ENCODE measurements at regions of chr2 and their contacts with region 1.

Region 1: DNA sequence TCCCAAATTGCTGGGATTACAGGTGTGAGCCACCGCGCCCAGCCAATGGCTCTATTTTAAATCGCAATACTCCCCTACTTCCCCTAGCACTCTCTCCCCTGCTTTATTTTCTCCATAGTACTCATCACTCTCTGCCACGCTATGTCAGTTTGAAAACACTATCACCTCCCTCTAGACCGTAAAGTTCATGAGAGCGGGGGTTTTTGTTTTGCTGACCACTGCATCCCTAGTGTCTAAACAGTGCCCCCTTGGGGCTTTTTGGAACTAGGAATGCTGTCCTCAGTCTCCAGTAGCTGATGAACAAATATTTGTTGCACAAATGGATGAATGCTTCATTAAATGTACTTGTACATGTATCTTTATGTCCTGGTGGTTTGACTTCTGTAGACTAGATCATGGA is 44.1 kb downstream of the ATOH8 start:
- DNase-seq: peak in 1 of 2 donors; percentile 52
- H3K4me3 ChIP-seq: no peak overlapping the region
- H3K27ac ChIP-seq: no peak overlapping the region
- H3K4me1 ChIP-seq: peaks cover 3 to 29% of the 10 kb centered on the region in 2 donors
- H3K27me3 ChIP-seq: no peaks in the 10 kb centered on the region
- CTCF ChIP-seq: peak; percentile 47 to 66 (median 62)
- POLR2A ChIP-seq: no peak

Region 2: DNA sequence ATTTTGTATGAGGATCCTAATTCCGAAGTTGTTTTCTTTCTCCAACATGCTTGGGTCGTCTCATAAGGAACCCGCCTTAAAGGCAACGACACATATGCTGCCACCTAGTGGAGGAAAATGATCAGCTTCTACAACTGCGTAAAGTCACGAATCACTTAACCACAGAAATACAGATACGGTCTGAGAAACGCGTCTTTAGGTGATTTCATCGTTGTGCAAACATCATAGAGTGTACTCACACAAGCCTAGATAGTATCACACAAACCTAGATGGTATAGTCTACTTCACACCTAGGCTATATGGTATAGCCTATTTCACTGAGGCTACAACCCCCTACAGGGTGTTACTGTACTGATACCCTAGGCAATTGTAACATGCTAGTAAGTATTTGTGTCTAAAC is 90.6 kb before region 1 on chr2:
- intact Hi-C with region 1: no loop called
- DNase-seq: peak in 1 of 2 donors; percentile 78
- H3K4me3 ChIP-seq: no peak overlapping the region
- H3K27ac ChIP-seq: peak overlapping the region; percentile 8 to 57
- H3K4me1 ChIP-seq: peaks cover 0 to 8% of the 10 kb centered on the region in 2 donors
- H3K27me3 ChIP-seq: no peaks in the 10 kb centered on the region
- CTCF ChIP-seq: peak; percentile 79 to 83 (median 83)
- POLR2A ChIP-seq: no peak

Region 3: DNA sequence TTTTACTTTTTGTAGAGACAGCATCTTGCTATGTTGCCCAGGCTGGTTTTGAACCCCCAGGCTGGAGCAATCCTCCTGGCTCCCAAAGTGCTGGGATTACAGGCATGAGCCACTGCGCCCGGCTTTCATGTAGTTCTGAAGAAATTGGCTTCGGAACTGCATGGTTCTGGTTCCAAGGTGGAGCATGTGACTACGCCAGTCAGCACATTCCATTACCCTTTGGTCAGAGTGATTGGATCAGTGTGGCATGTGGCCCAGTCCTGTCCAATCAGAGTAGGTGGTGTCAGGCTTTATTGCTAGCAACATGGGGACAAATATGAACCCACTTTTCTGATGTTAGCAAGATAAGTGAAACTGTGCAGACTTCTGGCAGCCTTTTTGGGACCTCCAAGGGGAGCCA is 60.4 kb before region 1 on chr2:
- intact Hi-C with region 1: loop called (anchors 5 kb)
- DNase-seq: peak; percentile 89 to 93
- H3K4me3 ChIP-seq: no peak overlapping the region
- H3K27ac ChIP-seq: peak overlapping the region; percentile 93 to 96
- H3K4me1 ChIP-seq: peaks cover 21 to 24% of the 10 kb centered on the region in 2 donors
- H3K27me3 ChIP-seq: no peaks in the 10 kb centered on the region
- CTCF ChIP-seq: no peak
- POLR2A ChIP-seq: no peak

Measured in uterus (tissue), 4 donors.